Right ventricle myocardium inferior (tissue), 1 donor: ENCODE measurements at regions of chr5 and their contacts with region 1.

Region 1: GRCh38 chr5:141618804-141619554 is at the start of gene DIAPH1:
- DNase-seq: peak; percentile 100
- ATAC-seq: peak; percentile 96
- total RNA-seq, gene DIAPH1: 36.1 TPM

Region 2: DNA sequence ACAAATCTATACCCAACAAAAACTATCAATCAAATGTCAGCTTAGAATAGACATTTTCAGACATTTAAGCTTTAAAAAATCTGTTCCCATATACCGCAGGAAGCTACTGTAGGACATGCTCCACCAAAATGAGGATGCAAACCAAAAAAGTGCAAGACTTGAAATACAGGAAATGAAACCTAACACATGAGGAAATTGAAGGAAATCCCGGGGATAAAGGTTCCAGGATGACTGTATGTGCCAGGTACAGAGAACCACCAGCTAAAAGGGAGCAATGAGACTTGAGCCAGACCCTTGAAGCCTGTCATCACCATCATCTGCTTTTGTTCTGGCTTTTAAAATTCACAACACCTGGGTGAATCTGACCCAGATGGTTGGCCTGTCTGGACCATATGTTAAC is 21.6 kb before region 1 on chr5:
- intact Hi-C with region 1: loop called (anchors 1 kb)
- DNase-seq: no peak
- ATAC-seq: no peak

Region 3: GRCh38 chr5:141636413-141637122 is 17.6 kb after region 1 on chr5 and contains the starts of genes HDAC3 and RELL2:
- intact Hi-C with region 1: loop called (anchors 1 kb)
- DNase-seq: peak; percentile 96
- ATAC-seq: peak; percentile 98
- total RNA-seq, gene HDAC3: 29.9 TPM
- total RNA-seq, gene RELL2: 0.78 TPM